ENCODE measurements at regions of chr9 and their contacts with region 1.

Region 1: GRCh38 chr9:89738137-89738932 is 133.5 kb downstream of the GADD45G start:
- DNase-seq: peak; percentile 54
- ATAC-seq: peak; percentile 69 to 75

Region 2: DNA sequence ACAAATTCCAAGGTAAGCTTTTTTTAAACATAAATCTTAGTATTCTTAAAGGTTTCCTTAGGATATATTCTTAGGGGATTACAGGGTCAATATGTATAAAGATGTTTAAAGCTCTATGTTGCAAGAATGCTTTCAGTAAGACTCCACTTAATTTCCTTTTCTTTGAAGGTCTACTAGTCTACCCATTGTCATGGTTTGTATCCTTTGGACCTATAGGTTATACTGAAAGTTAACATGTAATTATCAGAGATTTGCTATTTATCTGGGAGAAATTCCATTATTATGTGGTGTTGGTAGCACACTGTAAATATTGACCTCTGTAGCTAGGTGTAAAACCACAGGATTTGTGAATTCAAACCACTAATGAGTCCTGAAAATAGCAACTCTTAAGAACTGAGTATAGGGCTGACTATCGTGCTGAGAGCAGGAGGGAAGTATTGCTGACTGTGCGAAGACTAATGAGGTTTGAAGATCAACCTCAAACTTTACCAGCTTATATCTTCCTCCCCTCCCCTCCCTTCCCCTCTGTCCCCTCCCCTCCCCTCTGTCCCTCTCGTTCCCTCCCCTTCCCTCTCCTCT is 47.9 kb before region 1 on chr9:
- intact Hi-C with region 1: no loop called
- DNase-seq: no peak
- ATAC-seq: no peak

Region 3: DNA sequence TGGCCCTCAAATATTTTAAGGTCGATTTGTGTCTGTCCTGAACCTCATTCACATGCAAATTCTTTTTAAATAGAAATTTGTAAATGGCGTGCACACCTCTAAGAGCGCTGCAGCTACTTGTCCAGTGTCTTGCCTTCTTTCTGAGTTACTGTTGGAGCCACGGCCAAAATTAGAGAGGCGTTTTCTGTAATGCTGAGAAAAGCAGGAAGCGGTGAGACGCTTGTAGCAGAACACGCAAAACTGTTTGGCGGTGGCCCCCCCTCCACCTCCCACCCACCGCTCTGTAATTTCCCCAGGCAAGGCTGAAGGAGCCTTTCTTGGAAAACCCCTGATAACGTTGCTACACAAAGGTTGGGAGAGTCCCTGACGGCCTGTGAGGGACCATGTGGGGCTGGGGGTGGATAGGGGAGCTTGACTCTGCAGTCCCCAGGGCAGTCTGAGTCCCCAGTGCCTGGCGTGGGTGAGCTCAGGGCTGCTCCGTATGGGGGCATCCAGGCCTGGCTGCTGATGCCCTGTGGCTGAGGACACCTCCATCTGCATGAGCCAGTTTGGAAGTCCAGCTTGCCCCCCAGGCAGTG is 37.0 kb before region 1 on chr9:
- intact Hi-C with region 1: no loop called
- DNase-seq: no peak
- ATAC-seq: no peak

Region 4: DNA sequence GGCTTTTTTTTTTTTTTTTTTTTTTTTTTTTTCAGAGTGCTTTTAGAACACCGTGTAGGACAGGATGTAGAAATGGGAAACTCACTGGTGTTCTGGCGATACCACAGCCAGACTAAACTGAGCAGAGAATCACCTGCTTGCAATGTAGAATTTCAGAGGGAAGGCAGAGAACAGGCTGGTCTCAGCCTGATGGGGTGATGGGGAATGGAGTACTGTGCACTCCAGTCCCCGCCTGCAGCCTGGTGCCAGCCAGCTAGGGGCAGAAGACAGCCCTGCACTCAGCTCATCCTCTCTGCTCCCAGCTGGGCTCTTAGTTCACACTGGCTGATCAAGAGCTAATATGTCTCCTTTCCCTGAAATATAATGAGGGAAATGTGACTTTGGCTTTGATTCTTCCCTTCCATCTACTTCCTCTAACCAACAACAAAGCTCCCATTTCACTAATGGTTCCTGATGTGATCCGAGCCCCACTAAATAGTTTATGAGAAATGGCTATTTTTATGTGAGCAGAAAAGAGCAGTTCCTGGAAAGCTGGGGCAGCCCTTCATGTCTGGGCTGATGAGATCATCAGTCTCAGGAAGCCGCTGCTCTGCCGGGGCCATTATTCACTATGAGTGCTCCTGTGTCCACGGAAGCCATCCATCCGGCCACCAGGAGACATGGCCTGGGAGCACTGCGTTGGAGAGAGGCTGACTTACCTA is 76.2 kb after region 1 on chr9:
- intact Hi-C with region 1: no loop called
- DNase-seq: no peak
- ATAC-seq: peak in 1 of 2 donors; percentile 45

Region 5: DNA sequence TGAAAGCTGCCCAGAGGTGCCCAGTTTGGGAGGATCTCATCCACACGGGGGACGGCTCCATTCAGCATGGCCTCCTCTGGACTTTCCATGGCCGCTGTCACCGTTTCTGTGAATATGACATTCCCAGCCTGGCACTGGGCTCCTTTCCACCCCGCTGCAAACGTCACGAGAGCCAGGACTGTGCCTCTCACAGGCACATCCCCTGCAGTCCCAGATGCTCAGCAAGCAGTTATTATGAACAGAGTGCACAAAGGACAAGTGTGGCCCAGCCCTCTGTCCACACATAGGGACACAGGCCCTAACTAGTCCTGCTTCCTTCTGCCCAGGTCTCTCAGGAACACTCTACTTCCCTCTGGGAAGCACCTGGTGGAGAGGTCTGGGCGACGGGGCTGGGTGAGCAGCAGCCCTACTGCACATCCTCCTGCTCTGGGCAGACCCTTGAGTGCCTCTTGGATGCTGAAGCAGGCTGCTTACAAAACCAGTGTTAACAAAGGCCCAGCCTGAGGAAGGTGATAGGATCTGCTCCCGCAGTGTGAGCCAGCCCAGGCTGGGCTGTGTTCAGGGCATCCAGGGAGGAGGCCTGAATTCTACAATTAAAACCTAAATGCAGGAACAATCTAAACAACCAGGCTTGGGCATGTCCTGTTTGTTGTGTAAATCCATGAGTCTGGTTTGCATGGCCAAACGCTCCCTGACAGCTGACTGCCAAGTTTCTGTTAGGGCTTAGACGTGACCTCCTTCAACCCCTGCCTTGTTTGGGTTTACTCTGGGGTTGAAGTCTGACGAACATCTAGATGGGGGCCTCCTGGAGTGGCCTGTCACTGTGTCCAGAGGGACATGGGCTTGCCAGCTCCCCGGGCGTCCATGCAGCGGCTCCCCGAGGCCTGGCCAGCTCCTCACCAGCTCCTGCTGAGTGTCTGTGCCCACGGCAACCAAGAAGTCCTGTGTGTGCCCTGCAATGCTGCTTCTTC is 136.3 kb after region 1 on chr9:
- intact Hi-C with region 1: loop called in 1 of 2 experiments (anchors 5 kb)
- DNase-seq: peak; percentile 54
- ATAC-seq: peak; percentile 8 to 39